Endothelial cell of umbilical vein (primary cell): ENCODE measurements at regions of chr6 and their contacts with region 1.

Region 1: GRCh38 chr6:132483779-132484679 is 28.9 kb downstream of the STX7 start:
- DNase-seq: peak; percentile 71
- H3K4me3 ChIP-seq: no peak overlapping the region
- H3K27ac ChIP-seq: no peak overlapping the region
- H3K4me1 ChIP-seq: no peaks in the 10 kb centered on the region
- H3K27me3 ChIP-seq: no peaks in the 10 kb centered on the region
- CTCF ChIP-seq: peak; percentile 46 to 48
- POLR2A ChIP-seq: no peak

Region 2: DNA sequence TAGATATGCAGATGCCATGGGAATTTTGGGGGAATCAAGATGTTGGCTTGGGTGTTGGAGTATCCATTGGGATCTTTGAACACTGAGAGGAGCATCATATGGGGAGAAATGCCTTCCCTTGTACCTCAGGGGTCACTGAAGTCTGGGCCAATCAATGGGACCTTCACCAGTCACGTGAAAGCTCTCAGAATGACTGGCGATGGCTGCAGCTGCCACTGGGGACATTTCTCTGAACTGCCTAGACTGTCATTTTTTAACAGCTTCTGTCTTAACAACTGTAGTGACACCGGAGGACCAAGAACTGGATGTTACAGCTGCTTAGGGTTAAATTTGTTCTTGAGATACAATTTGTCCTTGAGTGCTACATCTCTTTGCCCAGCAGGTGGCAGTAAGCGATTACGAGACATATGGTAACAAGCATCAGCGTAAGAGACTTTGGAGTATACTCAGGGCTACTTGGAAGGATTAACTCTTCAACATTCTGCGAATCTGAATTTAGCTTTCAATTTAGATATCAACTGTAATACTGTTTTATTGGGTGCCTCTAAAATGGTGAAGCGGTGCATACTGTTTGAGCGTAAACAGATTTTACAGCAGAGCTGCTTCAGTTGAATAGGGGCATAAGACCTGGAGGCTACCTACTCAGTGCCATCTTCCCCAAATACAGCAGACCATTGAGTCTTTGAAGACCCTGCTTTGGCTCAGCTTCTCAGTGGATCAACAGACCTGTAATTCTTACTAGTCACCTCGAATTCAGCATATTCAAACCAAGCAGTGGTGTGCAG is 568.9 kb before region 1 on chr6:
- CTCF ChIA-PET with region 1: interaction called, 18 read pairs
- POLR2A ChIA-PET with region 1: no interaction called
- dilution Hi-C with region 1: no loop called
- intact Hi-C with region 1: loop called (anchors 2 kb)
- DNase-seq: peak; percentile 79
- H3K4me3 ChIP-seq: no peak overlapping the region
- H3K27ac ChIP-seq: no peak overlapping the region
- H3K4me1 ChIP-seq: peaks cover 2% of the 10 kb centered on the region
- H3K27me3 ChIP-seq: peaks cover 0 to 3% of the 10 kb centered on the region in 2 experiments
- CTCF ChIP-seq: peak; percentile 73 to 76
- POLR2A ChIP-seq: no peak

Region 3: GRCh38 chr6:132289756-132290155 is 194.3 kb before region 1 on chr6:
- CTCF ChIA-PET with region 1: interaction called, 16 read pairs
- POLR2A ChIA-PET with region 1: no interaction called
- dilution Hi-C with region 1: no loop called
- intact Hi-C with region 1: no loop called
- DNase-seq: no peak
- H3K4me3 ChIP-seq: no peak overlapping the region
- H3K27ac ChIP-seq: no peak overlapping the region
- H3K4me1 ChIP-seq: no peaks in the 10 kb centered on the region
- H3K27me3 ChIP-seq: peaks cover 0 to 4% of the 10 kb centered on the region in 2 experiments
- CTCF ChIP-seq: no peak
- POLR2A ChIP-seq: no peak

Region 4: DNA sequence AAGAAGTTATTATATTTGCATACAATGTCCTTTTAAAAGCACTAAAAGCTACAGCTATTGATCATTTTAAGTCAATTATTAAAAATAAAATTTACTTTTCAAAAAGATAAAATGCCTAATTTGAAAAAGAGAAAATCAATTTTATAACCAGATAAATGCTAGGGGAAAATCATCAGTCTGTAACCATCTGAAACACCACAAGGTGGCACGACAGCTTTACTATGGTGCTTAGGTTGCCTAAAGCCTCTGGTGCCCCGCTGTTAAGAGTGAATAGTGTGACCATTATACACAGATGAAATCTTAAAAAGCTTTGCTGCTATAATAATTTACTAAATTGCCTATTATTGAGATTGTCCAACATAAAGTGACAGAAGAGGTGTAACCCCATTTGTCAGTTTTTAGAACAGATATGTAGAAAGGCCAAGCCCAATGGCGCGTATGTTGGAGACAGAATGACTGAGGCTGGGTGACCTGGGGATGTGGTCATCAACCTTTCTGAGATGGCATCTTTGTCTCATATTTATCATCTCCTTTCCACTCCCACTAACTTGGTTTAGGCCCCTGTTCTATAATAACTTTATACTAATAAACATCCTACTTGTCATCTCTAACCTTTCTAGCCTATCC is 183.6 kb before region 1 on chr6:
- CTCF ChIA-PET with region 1: interaction called, 196 read pairs
- POLR2A ChIA-PET with region 1: no interaction called
- dilution Hi-C with region 1: no loop called
- intact Hi-C with region 1: loop called (anchors 1 kb)
- DNase-seq: peak; percentile 53
- H3K4me3 ChIP-seq: no peak overlapping the region
- H3K27ac ChIP-seq: no peak overlapping the region
- H3K4me1 ChIP-seq: no peaks in the 10 kb centered on the region
- H3K27me3 ChIP-seq: peaks cover 12 to 16% of the 10 kb centered on the region in 2 experiments
- CTCF ChIP-seq: peak; percentile 38 to 47
- POLR2A ChIP-seq: no peak

Region 5: GRCh38 chr6:132465530-132466485 is 18.2 kb before region 1 on chr6:
- CTCF ChIA-PET with region 1: interaction called, 15 read pairs
- POLR2A ChIA-PET with region 1: no interaction called
- dilution Hi-C with region 1: no loop called
- intact Hi-C with region 1: no loop called
- DNase-seq: peak; percentile 59
- H3K4me3 ChIP-seq: no peak overlapping the region
- H3K27ac ChIP-seq: no peak overlapping the region
- H3K4me1 ChIP-seq: peaks cover 14% of the 10 kb centered on the region
- H3K27me3 ChIP-seq: no peaks in the 10 kb centered on the region
- CTCF ChIP-seq: no peak
- POLR2A ChIP-seq: no peak

Region 6: GRCh38 chr6:132471788-132472187 is 12.2 kb before region 1 on chr6:
- CTCF ChIA-PET with region 1: interaction called, 19 read pairs
- POLR2A ChIA-PET with region 1: no interaction called
- dilution Hi-C with region 1: no loop called
- intact Hi-C with region 1: no loop called
- DNase-seq: no peak
- H3K4me3 ChIP-seq: no peak overlapping the region
- H3K27ac ChIP-seq: no peak overlapping the region
- H3K4me1 ChIP-seq: peaks cover 4% of the 10 kb centered on the region
- H3K27me3 ChIP-seq: no peaks in the 10 kb centered on the region
- CTCF ChIP-seq: no peak
- POLR2A ChIP-seq: no peak

Region 7: GRCh38 chr6:132495604-132496079 is 11.6 kb after region 1 on chr6:
- CTCF ChIA-PET with region 1: interaction called, 26 read pairs
- POLR2A ChIA-PET with region 1: no interaction called
- dilution Hi-C with region 1: no loop called
- intact Hi-C with region 1: no loop called
- DNase-seq: no peak
- H3K4me3 ChIP-seq: no peak overlapping the region
- H3K27ac ChIP-seq: no peak overlapping the region
- H3K4me1 ChIP-seq: peaks cover 9% of the 10 kb centered on the region
- H3K27me3 ChIP-seq: no peaks in the 10 kb centered on the region
- CTCF ChIP-seq: no peak
- POLR2A ChIP-seq: no peak

Region 8: DNA sequence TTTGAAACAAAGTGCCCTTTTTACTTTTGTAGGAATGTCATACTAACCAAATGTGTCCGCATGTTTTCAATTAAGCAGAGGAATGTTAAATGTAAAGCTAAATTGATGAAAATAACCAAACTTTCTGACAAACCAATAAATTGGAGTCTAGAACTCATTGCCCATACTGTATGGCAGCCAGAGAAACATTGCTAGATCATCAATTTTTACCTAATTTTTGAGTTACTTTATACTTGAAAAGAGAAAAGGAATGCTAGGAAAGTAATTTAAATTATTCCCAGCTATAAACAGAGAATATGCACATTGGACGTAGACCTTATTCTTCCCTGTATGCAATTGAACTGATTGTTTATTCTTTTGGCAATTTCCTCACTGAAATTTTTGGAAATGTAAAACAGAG is 374.7 kb after region 1 on chr6:
- CTCF ChIA-PET with region 1: no interaction called
- POLR2A ChIA-PET with region 1: no interaction called
- dilution Hi-C with region 1: no loop called
- intact Hi-C with region 1: no loop called
- DNase-seq: no peak
- H3K4me3 ChIP-seq: no peak overlapping the region
- H3K27ac ChIP-seq: no peak overlapping the region
- H3K4me1 ChIP-seq: no peaks in the 10 kb centered on the region
- H3K27me3 ChIP-seq: peaks cover 0 to 1% of the 10 kb centered on the region in 2 experiments
- CTCF ChIP-seq: no peak
- POLR2A ChIP-seq: no peak